ENCODE measurements at regions of chr16 and their contacts with region 1.

Region 1: DNA sequence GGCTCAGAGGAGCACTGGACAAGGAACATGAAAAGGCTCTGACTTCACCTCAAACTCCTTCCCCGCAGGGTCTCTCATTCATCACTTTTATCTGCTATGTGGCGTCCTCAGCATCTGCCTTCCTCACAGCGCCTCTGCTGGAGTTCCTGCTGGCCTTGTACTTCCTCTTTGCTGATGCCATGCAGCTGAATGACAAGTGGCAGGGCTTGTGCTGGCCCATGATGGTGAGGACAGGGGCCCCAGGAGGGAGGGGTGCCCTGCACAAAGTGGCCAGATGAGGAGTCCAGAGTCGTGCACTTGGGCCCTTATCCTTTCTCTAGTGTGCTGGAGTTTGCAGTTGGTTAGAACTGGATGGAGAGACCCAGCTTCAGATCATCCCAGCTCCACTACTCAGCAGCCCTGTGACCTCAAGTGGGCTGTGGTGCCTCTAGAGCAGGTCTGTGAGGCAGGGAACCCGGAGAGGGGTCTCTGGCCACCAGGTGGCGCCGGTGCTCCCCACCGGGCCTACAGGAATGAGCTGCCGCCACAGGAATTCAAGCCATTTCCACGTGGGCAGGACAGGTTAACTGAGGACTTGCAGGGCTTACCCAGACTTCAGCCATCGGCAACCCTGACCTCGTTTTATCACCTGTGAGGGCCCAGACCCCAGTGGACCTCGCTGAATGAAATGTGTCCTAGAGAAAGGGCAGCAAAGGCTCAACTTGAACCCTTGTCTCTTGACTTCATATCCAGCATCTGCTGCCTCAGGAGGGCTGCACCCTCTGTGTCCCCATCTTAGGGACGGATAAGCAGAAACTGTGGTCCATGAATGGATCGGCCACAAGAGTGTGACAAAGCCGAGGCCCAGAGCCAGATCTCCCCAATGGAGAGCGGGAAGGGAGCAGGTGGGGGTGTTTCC is 4.0 kb downstream of the CMTM3 start:
- DNase-seq: peak; percentile 68
- H3K4me3 Mint-ChIP-seq: peak overlapping the region; percentile 56
- H3K27ac Mint-ChIP-seq: peak overlapping the region; percentile 75
- H3K4me1 Mint-ChIP-seq: peaks cover 25% of the 10 kb centered on the region
- H3K27me3 Mint-ChIP-seq: no peaks in the 10 kb centered on the region

Region 2: GRCh38 chr16:66344533-66345145 is 263.9 kb before region 1 on chr16:
- intact Hi-C with region 1: no loop called
- DNase-seq: no peak
- H3K4me3 Mint-ChIP-seq: no peak overlapping the region
- H3K27ac Mint-ChIP-seq: no peak overlapping the region
- H3K4me1 Mint-ChIP-seq: no peaks in the 10 kb centered on the region
- H3K27me3 Mint-ChIP-seq: peaks cover 10% of the 10 kb centered on the region

Region 3: DNA sequence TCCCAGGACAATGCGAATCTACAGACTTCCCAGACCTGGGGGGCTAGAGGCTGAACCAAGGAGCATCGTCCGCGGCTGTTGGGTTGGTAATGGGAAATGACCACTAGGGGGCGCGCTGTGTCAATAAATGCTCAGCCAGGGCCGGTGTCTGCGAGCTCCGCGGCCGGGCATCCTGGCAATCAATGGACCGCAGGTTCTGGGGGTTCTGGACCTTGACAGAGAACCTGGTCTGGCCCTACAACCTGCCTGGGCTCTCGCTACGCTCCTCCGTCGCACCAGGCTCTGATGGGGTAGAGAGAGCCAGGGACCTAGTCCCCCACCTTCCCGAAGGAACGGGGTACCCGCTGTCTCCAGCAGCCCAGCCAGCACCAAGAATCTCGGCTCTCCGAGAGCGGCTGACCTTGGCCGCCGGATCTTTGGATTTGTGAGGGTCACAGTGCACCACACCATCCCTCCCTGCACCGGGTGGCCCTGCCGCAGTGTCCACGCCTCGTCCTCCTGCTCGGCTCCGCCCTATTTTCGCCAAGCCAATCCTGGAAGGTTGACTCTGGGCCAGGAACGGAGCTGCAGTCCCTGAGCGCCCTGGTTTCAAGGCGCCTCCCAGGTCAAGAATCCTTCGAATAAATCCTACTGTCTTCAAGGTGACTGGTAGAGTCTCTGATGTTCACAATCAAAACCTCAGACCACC is 201.8 kb before region 1 on chr16:
- intact Hi-C with region 1: loop called (anchors 1 kb)
- DNase-seq: peak; percentile 77
- H3K4me3 Mint-ChIP-seq: peak overlapping the region; percentile 84
- H3K27ac Mint-ChIP-seq: peak overlapping the region; percentile 25
- H3K4me1 Mint-ChIP-seq: peaks cover 26% of the 10 kb centered on the region
- H3K27me3 Mint-ChIP-seq: peaks cover 23% of the 10 kb centered on the region

Region 4: GRCh38 chr16:66521951-66522771 is 86.3 kb before region 1 on chr16:
- intact Hi-C with region 1: loop called (anchors 1 kb)
- DNase-seq: peak; percentile 88
- H3K4me3 Mint-ChIP-seq: peak overlapping the region; percentile 53
- H3K27ac Mint-ChIP-seq: peak overlapping the region; percentile 77
- H3K4me1 Mint-ChIP-seq: peaks cover 93% of the 10 kb centered on the region
- H3K27me3 Mint-ChIP-seq: peaks cover 2% of the 10 kb centered on the region

Region 5: GRCh38 chr16:66563574-66564334 is 44.7 kb before region 1 on chr16:
- intact Hi-C with region 1: loop called (anchors 1 kb)
- DNase-seq: no peak
- H3K4me3 Mint-ChIP-seq: no peak overlapping the region
- H3K27ac Mint-ChIP-seq: peak overlapping the region; percentile 70
- H3K4me1 Mint-ChIP-seq: peaks cover 69% of the 10 kb centered on the region
- H3K27me3 Mint-ChIP-seq: no peaks in the 10 kb centered on the region

Region 6: DNA sequence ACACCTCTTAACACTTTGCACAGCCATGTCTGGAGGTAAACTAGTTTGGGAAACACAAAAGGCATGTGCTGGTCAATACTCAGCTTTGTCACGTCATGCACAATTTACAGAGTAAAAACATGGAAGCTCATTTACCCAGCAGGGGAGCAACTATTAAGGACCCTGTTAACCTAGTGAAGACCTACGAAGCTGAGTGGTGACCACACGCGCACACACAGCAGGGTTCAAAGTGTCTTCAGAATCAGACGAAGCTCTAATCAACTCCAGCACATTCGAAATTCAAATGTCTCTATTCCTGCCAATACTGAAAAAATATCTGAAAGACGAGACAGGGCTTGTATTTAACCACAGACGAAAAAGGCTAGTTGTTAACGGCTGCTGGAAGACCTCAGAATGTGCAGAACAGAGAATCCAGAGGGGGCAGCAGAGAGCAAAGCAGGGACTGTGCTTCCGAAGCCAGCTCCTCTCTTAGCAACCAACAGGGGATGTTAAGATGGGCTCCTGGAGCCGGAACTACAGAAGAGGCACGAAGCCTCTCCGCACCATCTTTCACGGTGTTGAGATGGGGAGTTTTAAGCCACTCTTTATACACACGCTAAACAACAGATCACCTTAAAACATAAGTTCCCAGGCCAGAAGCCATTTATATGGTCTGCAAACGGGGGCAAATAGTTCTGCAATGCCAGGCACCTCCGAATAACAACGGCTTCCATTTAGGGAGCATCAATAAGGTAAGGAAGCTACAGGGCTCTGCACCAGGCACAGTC is 42.4 kb after region 1 on chr16:
- intact Hi-C with region 1: loop called (anchors 1 kb)
- DNase-seq: peak; percentile 68
- H3K4me3 Mint-ChIP-seq: no peak overlapping the region
- H3K27ac Mint-ChIP-seq: no peak overlapping the region
- H3K4me1 Mint-ChIP-seq: peaks cover 21% of the 10 kb centered on the region
- H3K27me3 Mint-ChIP-seq: peaks cover 2% of the 10 kb centered on the region

Region 7: GRCh38 chr16:66682271-66682670 is 73.8 kb after region 1 on chr16:
- intact Hi-C with region 1: no loop called
- DNase-seq: no peak
- H3K4me3 Mint-ChIP-seq: no peak overlapping the region
- H3K27ac Mint-ChIP-seq: no peak overlapping the region
- H3K4me1 Mint-ChIP-seq: no peaks in the 10 kb centered on the region
- H3K27me3 Mint-ChIP-seq: peaks cover 5% of the 10 kb centered on the region

Region 8: DNA sequence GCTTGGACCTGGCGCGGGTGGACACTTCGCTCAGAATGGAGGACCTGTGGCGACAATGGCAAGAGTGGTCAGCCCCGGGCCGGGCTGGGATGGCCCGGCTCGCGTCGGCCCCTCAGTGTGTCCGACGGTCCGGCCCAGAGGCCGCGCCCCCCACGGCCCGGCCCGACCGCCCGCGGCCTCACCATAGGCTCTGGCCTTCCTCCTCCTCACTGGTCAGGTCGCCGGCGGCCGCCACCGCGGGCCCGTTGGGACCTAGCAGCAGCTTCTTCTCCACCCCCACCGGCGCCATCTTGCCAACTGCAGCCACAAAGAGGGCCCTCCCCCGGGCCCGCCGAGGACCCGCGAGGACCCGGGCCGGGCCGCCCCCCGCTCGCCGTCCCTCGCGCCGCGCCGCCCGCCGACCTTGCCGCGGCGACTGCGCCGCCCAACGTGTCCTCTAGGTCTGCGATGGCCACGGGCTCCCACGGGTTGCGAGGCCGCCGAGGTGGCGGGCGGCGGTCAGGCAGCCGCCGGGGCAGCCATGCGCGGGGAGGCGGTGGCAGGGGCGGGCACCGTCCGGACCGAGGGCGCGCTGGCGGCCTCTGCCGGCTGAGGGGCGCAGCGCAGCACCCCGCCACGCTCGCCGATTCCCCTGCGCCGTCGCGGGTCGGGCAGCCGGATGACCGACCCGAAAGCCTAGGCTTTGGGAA is 143.0 kb after region 1 on chr16 and contains the start of gene DYNC1LI2:
- intact Hi-C with region 1: loop called (anchors 2 kb)
- DNase-seq: peak; percentile 76
- H3K4me3 Mint-ChIP-seq: peak within 1 kb of the TSS; percentile 93
- H3K27ac Mint-ChIP-seq: peak within 1 kb of the TSS; percentile 80
- H3K4me1 Mint-ChIP-seq: peaks cover 46% of the 10 kb centered on the region
- H3K27me3 Mint-ChIP-seq: peaks cover 16% of the 10 kb centered on the region
- total RNA-seq, gene DYNC1LI2: 55.7 and 60.3 TPM in 2 replicates

Measured in activated T-helper 1 cell treated with anti-CD3 and anti-CD28 coated beads, Interleukin-12 subunit alpha, Interleukin-12 subunit beta, Interleukin-2, Interleukin-4 antibody, amounts not matched to agents 30 ng/mL and 10 ng/mL and 1 ng/mL, durations not matched to agents 14 hours and 24 hours and 36 hours (primary cell).